ENCODE measurements at regions of chr4 and their contacts with region 1.

Region 1: DNA sequence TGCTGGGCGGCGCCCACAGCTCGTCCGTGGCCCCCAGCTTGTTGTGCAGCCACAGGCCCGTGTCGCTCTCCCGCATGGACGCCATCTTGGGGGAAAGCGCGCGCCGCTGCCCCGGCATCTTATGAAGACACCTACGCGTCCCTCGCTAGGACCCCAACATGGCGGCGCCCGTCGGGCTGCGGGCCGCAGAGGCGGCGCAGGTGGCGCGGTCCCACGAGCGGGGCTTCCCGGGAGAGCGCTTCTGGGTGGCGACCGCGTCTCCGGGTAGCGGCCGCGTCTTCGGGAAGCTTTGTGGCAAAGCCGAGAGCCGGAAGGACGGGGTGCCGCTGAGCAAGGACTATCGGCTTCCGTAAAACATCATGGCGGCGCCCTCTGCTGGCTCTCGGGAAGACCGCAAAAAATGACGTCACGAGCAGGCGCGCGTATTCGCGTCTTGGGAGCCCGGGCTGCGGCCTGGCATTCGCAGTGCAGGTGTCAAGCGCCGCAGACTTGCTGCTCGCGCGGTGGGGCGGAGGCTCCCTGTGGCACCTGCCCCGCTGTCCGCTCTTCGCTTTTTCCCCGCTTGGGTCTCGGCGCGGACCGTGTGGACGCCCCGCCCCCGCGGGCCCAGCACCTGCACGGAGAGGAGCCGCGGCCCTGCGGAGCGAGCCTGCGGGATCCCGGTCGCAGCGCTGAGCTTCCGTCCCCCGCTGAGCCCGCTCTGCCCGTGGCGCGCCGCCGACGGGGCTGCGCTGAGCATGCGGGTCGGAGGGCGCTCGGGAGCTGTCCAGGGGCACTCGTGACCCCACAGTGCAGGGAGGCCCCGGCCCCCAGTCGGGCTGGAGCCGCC is at the start of gene NELFA:
- DNase-seq: peak; percentile 95
- H3K4me3 ChIP-seq: peak within 1 kb of the TSS; percentile 100
- H3K4me3 Mint-ChIP-seq: peak within 1 kb of the TSS; percentile 79
- H3K27ac Mint-ChIP-seq: peak within 1 kb of the TSS; percentile 85
- H3K4me1 ChIP-seq: no peaks in the 10 kb centered on the region
- H3K4me1 Mint-ChIP-seq: peaks cover 6% of the 10 kb centered on the region
- H3K27me3 ChIP-seq: no peaks in the 10 kb centered on the region
- H3K27me3 Mint-ChIP-seq: no peaks in the 10 kb centered on the region
- CTCF ChIP-seq: peak; percentile 48 to 80
- total RNA-seq, gene NELFA: 47.7 and 53.0 TPM in 2 replicates

Region 2: GRCh38 chr4:2041234-2042130 is 32.4 kb after region 1 on chr4:
- CTCF ChIA-PET with region 1: interaction called, 7 read pairs
- POLR2A ChIA-PET with region 1: interaction called, 12 read pairs
- intact Hi-C with region 1: loop called (anchors 2 kb)
- DNase-seq: peak; percentile 86 to 88
- H3K4me3 ChIP-seq: peak overlapping the region; percentile 87
- H3K4me3 Mint-ChIP-seq: peak overlapping the region; percentile 85
- H3K27ac Mint-ChIP-seq: peak overlapping the region; percentile 69
- H3K4me1 ChIP-seq: peaks cover 4% of the 10 kb centered on the region; the same call in 1 of the 2 replicates
- H3K4me1 Mint-ChIP-seq: peaks cover 5% of the 10 kb centered on the region
- H3K27me3 ChIP-seq: no peaks in the 10 kb centered on the region
- H3K27me3 Mint-ChIP-seq: no peaks in the 10 kb centered on the region
- CTCF ChIP-seq: no peak